ENCODE measurements at regions of chr16 and their contacts with region 1.

Region 1: DNA sequence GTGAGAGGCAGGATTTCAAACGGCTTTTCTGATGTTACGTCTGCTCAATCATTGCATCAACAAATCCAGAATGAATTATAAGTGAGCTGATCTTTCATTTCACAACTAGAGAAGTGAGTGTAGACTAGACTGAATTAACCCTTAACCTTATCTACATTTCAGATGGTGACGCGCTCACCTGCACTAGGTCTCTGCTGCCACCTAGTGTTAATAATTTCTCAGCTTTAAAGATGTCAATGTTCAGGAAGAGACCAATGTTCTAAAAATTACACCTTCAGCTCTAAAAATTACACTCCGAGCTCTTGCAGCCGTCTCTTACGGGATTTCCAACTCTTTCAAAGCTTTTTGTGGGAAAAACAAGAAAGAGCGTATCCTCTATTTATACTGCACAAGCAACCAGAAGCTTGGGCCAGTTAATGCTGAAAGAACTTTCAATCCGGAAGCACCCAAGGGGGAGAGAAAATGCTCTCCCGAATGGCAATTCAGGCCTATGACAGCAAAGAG is 88.2 kb upstream of the FA2H start:
- DNase-seq: no peak
- H3K4me3 ChIP-seq: no peak overlapping the region
- H3K27ac ChIP-seq: no peak overlapping the region
- H3K4me1 ChIP-seq: peaks cover 0 to 8% (median 4%) of the 10 kb centered on the region in 4 donors
- H3K27me3 ChIP-seq: no peaks in the 10 kb centered on the region
- CTCF ChIP-seq: peak; percentile 71 to 82 (median 82)
- EP300 ChIP-seq: no peak
- POLR2A ChIP-seq: no peak

Region 2: DNA sequence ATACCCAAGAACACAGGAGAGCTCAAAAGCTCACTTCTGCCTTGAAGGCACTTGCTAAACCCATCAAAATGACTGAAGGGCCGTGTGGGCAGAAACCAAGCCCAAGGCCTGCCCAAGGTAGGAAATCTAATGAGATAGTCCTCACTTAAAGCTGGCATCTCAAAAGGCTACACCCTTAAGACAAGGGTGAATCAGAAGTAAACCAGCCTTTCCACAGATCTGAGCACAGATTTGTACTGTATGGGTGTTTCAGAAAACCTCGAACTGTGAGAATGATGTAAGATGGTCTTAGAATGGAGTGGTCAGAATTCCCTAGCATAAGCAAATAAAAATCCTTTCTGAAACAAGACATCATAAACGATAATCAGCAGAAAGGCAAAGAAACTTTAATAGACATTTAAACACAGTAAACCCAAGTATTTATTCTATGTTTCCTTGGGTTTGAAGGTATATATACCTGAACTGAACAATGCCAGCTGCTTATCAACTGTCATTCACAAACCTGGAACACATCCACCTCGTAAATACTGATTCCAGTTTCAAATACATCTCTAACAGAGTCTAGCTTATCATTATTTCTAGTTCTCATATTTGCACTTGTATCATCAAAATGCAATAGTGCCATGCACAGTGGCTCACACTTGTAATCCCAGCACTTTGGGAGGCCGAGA is 293.7 kb before region 1 on chr16:
- intact Hi-C with region 1: no loop called
- DNase-seq: no peak
- H3K4me3 ChIP-seq: no peak overlapping the region
- H3K27ac ChIP-seq: no peak overlapping the region
- H3K4me1 ChIP-seq: peaks cover 8 to 49% (median 39%) of the 10 kb centered on the region in 4 donors
- H3K27me3 ChIP-seq: no peaks in the 10 kb centered on the region
- CTCF ChIP-seq: no peak
- EP300 ChIP-seq: no peak
- POLR2A ChIP-seq: no peak

Region 3: DNA sequence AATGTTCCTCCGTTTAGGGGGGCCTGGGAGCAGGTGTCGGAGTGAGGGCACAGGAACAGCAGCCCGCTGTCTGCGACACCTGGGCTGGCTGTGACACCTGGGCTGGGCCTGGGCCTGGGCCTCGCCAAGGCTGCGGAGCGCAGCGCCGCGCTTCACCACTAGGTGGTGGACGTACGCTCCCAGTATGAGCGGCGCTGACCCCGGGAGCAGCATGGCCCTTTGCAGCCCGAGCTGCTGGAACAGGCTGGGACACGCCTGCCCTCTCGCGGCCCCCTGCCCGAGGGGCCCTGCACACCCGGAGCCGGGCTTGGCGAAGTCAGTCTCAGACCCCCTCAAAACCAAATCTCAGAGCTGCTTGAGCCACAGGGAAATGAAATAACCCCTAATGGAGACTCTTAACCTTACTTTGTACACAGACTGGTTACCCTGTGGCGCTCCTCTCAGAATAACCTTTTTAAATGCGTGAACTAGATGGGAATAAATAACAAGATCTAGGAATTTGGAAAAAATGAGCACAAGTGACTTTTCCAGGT is 49.6 kb before region 1 on chr16:
- intact Hi-C with region 1: loop called (anchors 2 kb)
- DNase-seq: no peak
- H3K4me3 ChIP-seq: no peak overlapping the region
- H3K27ac ChIP-seq: no peak overlapping the region
- H3K4me1 ChIP-seq: peaks cover 3 to 5% (median 4%) of the 10 kb centered on the region in 4 donors
- H3K27me3 ChIP-seq: no peaks in the 10 kb centered on the region
- CTCF ChIP-seq: peak; percentile 5 to 92 (median 87)
- EP300 ChIP-seq: no peak
- POLR2A ChIP-seq: no peak

Measured in esophagus muscularis mucosa (tissue), 4 donors.